Esophagus muscularis mucosa (tissue), 4 donors: ENCODE measurements at regions of chr3 and their contacts with region 1.

Region 1: GRCh38 chr3:44323341-44323955 is 15.1 kb upstream of the TCAIM start:
- DNase-seq: no peak
- H3K4me3 ChIP-seq: no peak overlapping the region
- H3K27ac ChIP-seq: no peak overlapping the region
- H3K4me1 ChIP-seq: no peaks in the 10 kb centered on the region
- H3K27me3 ChIP-seq: peaks cover 0 to 5% (median 0%) of the 10 kb centered on the region in 4 donors
- CTCF ChIP-seq: peak; percentile 74 to 88 (median 84)
- EP300 ChIP-seq: no peak
- POLR2A ChIP-seq: no peak

Region 2: GRCh38 chr3:43978708-43979107 is 344.7 kb before region 1 on chr3:
- intact Hi-C with region 1: no loop called
- DNase-seq: no peak
- H3K4me3 ChIP-seq: no peak overlapping the region
- H3K27ac ChIP-seq: no peak overlapping the region
- H3K4me1 ChIP-seq: no peaks in the 10 kb centered on the region
- H3K27me3 ChIP-seq: peaks cover 0 to 15% (median 0%) of the 10 kb centered on the region in 4 donors
- CTCF ChIP-seq: no peak
- EP300 ChIP-seq: no peak
- POLR2A ChIP-seq: no peak

Region 3: GRCh38 chr3:44375450-44375849 is 52.0 kb after region 1 on chr3:
- intact Hi-C with region 1: no loop called
- DNase-seq: no peak
- H3K4me3 ChIP-seq: no peak overlapping the region
- H3K27ac ChIP-seq: no peak overlapping the region
- H3K4me1 ChIP-seq: no peaks in the 10 kb centered on the region
- H3K27me3 ChIP-seq: no peaks in the 10 kb centered on the region
- CTCF ChIP-seq: no peak
- EP300 ChIP-seq: no peak
- POLR2A ChIP-seq: no peak

Region 4: GRCh38 chr3:44396200-44397171 is 73.0 kb after region 1 on chr3:
- intact Hi-C with region 1: loop called (anchors 10 kb)
- DNase-seq: no peak
- H3K4me3 ChIP-seq: no peak overlapping the region
- H3K27ac ChIP-seq: no peak overlapping the region
- H3K4me1 ChIP-seq: no peaks in the 10 kb centered on the region
- H3K27me3 ChIP-seq: no peaks in the 10 kb centered on the region
- CTCF ChIP-seq: no peak
- EP300 ChIP-seq: no peak
- POLR2A ChIP-seq: no peak

Region 5: GRCh38 chr3:44477312-44478030 is 154.0 kb after region 1 on chr3 and contains the start of gene ZNF445:
- intact Hi-C with region 1: loop called (anchors 5 kb)
- DNase-seq: peak; percentile 93
- H3K4me3 ChIP-seq: peak within 1 kb of the TSS; percentile 75 to 88 (median 82)
- H3K27ac ChIP-seq: peak within 1 kb of the TSS; percentile 74 to 87 (median 82)
- H3K4me1 ChIP-seq: peaks cover 14 to 38% (median 30%) of the 10 kb centered on the region in 4 donors
- H3K27me3 ChIP-seq: no peaks in the 10 kb centered on the region
- CTCF ChIP-seq: no peak
- EP300 ChIP-seq: no peak
- POLR2A ChIP-seq: no peak
- total RNA-seq, gene ZNF445: 6.5 to 11.9 (median 10.1) TPM

Region 6: GRCh38 chr3:44576613-44577012 is 253.2 kb after region 1 on chr3:
- intact Hi-C with region 1: no loop called
- DNase-seq: no peak
- H3K4me3 ChIP-seq: no peak overlapping the region
- H3K27ac ChIP-seq: no peak overlapping the region
- H3K4me1 ChIP-seq: no peaks in the 10 kb centered on the region
- H3K27me3 ChIP-seq: peaks cover 0 to 5% (median 0%) of the 10 kb centered on the region in 4 donors
- CTCF ChIP-seq: no peak
- EP300 ChIP-seq: no peak
- POLR2A ChIP-seq: no peak